B cell (primary cell): ENCODE measurements at regions of chr12 and their contacts with region 1.

Region 1: DNA sequence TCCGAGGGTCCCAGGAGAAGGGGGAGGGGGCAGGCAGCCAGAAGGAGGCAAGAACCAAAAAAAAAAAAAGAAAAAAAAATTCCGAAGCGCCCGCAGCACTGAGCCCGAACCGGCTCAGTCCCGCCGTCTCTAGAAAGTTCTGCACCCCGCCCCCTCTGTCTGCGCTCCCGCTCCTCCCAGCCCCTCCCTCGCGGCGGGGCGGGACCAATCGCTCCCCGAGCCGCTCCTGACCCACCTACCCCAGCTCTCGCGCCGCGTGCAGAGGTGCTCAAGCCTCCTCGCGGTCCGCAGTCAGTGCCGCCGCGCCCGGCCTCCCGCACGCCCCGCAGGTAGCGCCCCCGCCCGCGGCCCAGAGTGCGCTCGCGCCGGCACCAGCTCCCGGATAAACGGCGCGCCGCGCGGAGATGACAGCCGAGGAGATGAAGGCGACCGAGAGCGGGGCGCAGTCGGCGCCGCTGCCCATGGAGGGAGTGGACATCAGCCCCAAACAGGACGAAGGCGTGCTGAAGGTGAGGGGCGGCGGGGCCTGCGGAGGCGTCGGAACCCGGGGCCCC is at the start of gene FKBP4:
- DNase-seq: peak; percentile 91
- ATAC-seq: peak; percentile 85
- H3K4me3 ChIP-seq: peak within 1 kb of the TSS in 4 of 5 experiments; percentile 69 to 97 (median 80)
- H3K4me3 Mint-ChIP-seq: peak within 1 kb of the TSS; percentile 97
- H3K27ac ChIP-seq: peak within 1 kb of the TSS; percentile 58 to 71
- H3K27ac Mint-ChIP-seq: peak within 1 kb of the TSS; percentile 95
- H3K4me1 ChIP-seq: peaks cover 12 to 21% of the 10 kb centered on the region in 2 donors
- H3K4me1 Mint-ChIP-seq: peaks cover 24% of the 10 kb centered on the region
- H3K27me3 ChIP-seq: no peaks in the 10 kb centered on the region
- H3K27me3 Mint-ChIP-seq: no peaks in the 10 kb centered on the region
- CTCF ChIP-seq: no peak
- total RNA-seq, gene FKBP4: 56.7 and 57.5 TPM in 2 replicates

Region 2: GRCh38 chr12:2004113-2004929 is 790.5 kb before region 1 on chr12 and contains the start of gene DCP1B:
- CTCF ChIA-PET with region 1: no interaction called
- POLR2A ChIA-PET with region 1: no interaction called
- intact Hi-C with region 1: loop called (anchors 10 kb)
- DNase-seq: peak; percentile 95
- ATAC-seq: peak; percentile 99
- H3K4me3 ChIP-seq: peak within 1 kb of the TSS; percentile 64 to 92 (median 92)
- H3K4me3 Mint-ChIP-seq: peak within 1 kb of the TSS; percentile 99
- H3K27ac ChIP-seq: peak within 1 kb of the TSS; percentile 81 to 93
- H3K27ac Mint-ChIP-seq: peak within 1 kb of the TSS; percentile 99
- H3K4me1 ChIP-seq: peaks cover 11 to 15% of the 10 kb centered on the region in 2 donors
- H3K4me1 Mint-ChIP-seq: peaks cover 26% of the 10 kb centered on the region
- H3K27me3 ChIP-seq: no peaks in the 10 kb centered on the region
- H3K27me3 Mint-ChIP-seq: no peaks in the 10 kb centered on the region
- CTCF ChIP-seq: no peak
- total RNA-seq, gene DCP1B: 18.0 and 18.1 TPM in 2 replicates

Region 3: GRCh38 chr12:2783936-2784600 is 10.7 kb before region 1 on chr12:
- CTCF ChIA-PET with region 1: interaction called, 11 read pairs
- POLR2A ChIA-PET with region 1: no interaction called
- intact Hi-C with region 1: no loop called
- DNase-seq: peak; percentile 66
- ATAC-seq: peak; percentile 84
- H3K4me3 ChIP-seq: peak overlapping the region in 4 of 5 experiments; percentile 20 to 50 (median 38)
- H3K4me3 Mint-ChIP-seq: peak overlapping the region; percentile 90
- H3K27ac ChIP-seq: no peak overlapping the region
- H3K27ac Mint-ChIP-seq: no peak overlapping the region
- H3K4me1 ChIP-seq: peaks cover 6 to 8% of the 10 kb centered on the region in 2 donors
- H3K4me1 Mint-ChIP-seq: peaks cover 13% of the 10 kb centered on the region
- H3K27me3 ChIP-seq: peaks cover 0 to 16% (median 2%) of the 10 kb centered on the region in 4 experiments
- H3K27me3 Mint-ChIP-seq: peaks cover 21% of the 10 kb centered on the region
- CTCF ChIP-seq: peak; percentile 97

Region 4: DNA sequence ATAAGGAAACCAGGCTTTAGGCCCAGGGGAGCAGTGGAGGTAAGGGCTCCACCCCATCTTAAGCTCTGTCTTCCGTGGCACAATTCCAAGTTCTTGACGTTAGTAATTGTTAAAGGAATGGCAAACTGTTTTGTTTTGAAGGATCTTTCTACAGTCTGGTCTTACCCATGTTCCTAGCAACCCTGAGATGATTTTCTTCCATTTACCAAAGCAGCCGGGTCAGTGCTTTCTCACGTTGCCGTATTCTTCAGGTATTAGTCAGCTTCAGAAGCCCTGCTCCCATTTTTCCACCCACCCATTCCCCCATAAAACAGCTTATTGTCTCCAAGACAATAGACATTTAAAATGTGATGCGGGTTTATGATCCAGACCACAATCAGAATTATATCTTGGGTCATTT is 29.7 kb after region 1 on chr12:
- CTCF ChIA-PET with region 1: no interaction called
- POLR2A ChIA-PET with region 1: no interaction called
- intact Hi-C with region 1: no loop called
- DNase-seq: no peak
- ATAC-seq: no peak
- H3K4me3 ChIP-seq: no peak overlapping the region
- H3K4me3 Mint-ChIP-seq: no peak overlapping the region
- H3K27ac ChIP-seq: no peak overlapping the region
- H3K27ac Mint-ChIP-seq: no peak overlapping the region
- H3K4me1 ChIP-seq: no peaks in the 10 kb centered on the region
- H3K4me1 Mint-ChIP-seq: no peaks in the 10 kb centered on the region
- H3K27me3 ChIP-seq: no peaks in the 10 kb centered on the region
- H3K27me3 Mint-ChIP-seq: no peaks in the 10 kb centered on the region
- CTCF ChIP-seq: no peak

Region 5: GRCh38 chr12:2877047-2877952 is 82.5 kb after region 1 on chr12 and contains the starts of genes FOXM1 and RHNO1:
- CTCF ChIA-PET with region 1: no interaction called
- POLR2A ChIA-PET with region 1: interaction called, 3 read pairs
- intact Hi-C with region 1: loop called (anchors 5 kb)
- DNase-seq: peak; percentile 90
- ATAC-seq: peak; percentile 79
- H3K4me3 ChIP-seq: peak within 1 kb of the TSS; percentile 81 to 98 (median 88)
- H3K4me3 Mint-ChIP-seq: peak within 1 kb of the TSS; percentile 97
- H3K27ac ChIP-seq: peak within 1 kb of the TSS; percentile 90 to 91
- H3K27ac Mint-ChIP-seq: peak within 1 kb of the TSS; percentile 96
- H3K4me1 ChIP-seq: peaks cover 17 to 23% of the 10 kb centered on the region in 2 donors
- H3K4me1 Mint-ChIP-seq: peaks cover 30% of the 10 kb centered on the region
- H3K27me3 ChIP-seq: no peaks in the 10 kb centered on the region
- H3K27me3 Mint-ChIP-seq: no peaks in the 10 kb centered on the region
- CTCF ChIP-seq: no peak
- total RNA-seq, gene FOXM1: 0.51 and 0.84 TPM in 2 replicates
- total RNA-seq, gene RHNO1: 13.5 and 15.0 TPM in 2 replicates

Region 6: DNA sequence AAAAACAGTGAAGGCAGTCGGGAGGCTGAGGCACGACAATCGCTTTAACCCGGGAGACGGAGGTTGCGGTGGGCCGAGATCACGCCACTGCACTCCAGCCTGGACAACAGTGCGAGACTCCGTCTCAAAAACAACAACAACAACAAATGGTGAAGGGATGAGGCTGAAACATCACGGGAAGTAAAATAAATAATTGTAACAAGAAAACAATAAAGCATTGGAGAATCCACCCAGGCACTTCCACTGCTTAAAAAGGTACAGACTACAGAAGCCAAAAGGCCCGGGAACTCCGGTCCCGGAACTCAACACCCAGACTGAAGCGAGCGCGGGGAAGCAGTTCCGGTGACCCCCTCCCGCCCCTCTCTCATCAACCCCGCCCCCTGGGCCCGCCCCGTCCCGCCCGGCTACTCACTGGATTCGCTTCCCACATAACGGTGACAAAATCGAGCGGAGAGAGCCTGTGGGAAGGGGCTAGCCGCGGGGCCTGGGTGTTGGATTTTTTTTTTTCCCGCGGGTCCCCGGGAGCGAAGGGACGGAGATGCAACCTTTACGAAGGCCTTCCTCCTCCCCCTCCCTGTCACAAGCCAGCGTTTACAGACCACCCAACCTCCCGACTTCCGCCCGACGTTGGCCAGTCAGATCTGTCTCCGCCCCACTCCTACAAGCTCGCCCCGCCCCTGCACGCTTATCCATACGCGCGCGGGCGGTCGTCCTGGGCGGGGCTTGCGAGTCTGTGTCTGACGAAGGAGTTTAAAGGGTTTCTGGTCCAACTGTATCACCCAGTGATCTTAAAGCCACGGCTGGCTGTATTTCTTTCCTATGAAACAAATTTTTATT is 1078.2 kb after region 1 on chr12 and contains the start of gene PARP11:
- CTCF ChIA-PET with region 1: no interaction called
- POLR2A ChIA-PET with region 1: no interaction called
- intact Hi-C with region 1: loop called (anchors 10 kb)
- DNase-seq: peak; percentile 98
- ATAC-seq: peak; percentile 98
- H3K4me3 ChIP-seq: peak within 1 kb of the TSS; percentile 71 to 91 (median 75)
- H3K4me3 Mint-ChIP-seq: peak within 1 kb of the TSS; percentile 94
- H3K27ac ChIP-seq: peak within 1 kb of the TSS; percentile 90 to 93
- H3K27ac Mint-ChIP-seq: peak within 1 kb of the TSS; percentile 94
- H3K4me1 ChIP-seq: peaks cover 33 to 37% of the 10 kb centered on the region in 2 donors
- H3K4me1 Mint-ChIP-seq: peaks cover 46% of the 10 kb centered on the region
- H3K27me3 ChIP-seq: no peaks in the 10 kb centered on the region
- H3K27me3 Mint-ChIP-seq: peaks cover 5% of the 10 kb centered on the region
- CTCF ChIP-seq: no peak
- total RNA-seq, gene PARP11: 24.3 and 26.3 TPM in 2 replicates